K562 (cell line): ENCODE measurements at regions of chr22 and their contacts with region 1.

Region 1: GRCh38 chr22:20625270-20625669 is 117.9 kb downstream of the MED15 start:
- DNase-seq: no peak
- ATAC-seq: no peak
- H3K4me3 ChIP-seq: no peak overlapping the region
- H3K27ac ChIP-seq: no peak overlapping the region
- H3K4me1 ChIP-seq: peaks cover 0 to 3% of the 10 kb centered on the region in 2 experiments; a peak in 1 of 5 replicates
- H3K27me3 ChIP-seq: peaks cover 46 to 72% of the 10 kb centered on the region in 2 experiments
- CTCF ChIP-seq: no peak
- EP300 ChIP-seq: no peak
- POLR2A ChIP-seq: no peak
- RAD21 ChIP-seq: no peak

Region 2: GRCh38 chr22:20615021-20615420 is 10.2 kb before region 1 on chr22:
- CTCF ChIA-PET with region 1: no interaction called
- POLR2A ChIA-PET with region 1: interaction called, 234 read pairs
- in situ Hi-C with region 1: no loop called
- intact Hi-C with region 1: no loop called
- DNase-seq: no peak
- ATAC-seq: no peak; the same call in 2 of the 3 replicates
- H3K4me3 ChIP-seq: no peak overlapping the region
- H3K27ac ChIP-seq: no peak overlapping the region
- H3K4me1 ChIP-seq: peaks cover 7 to 13% of the 10 kb centered on the region in 2 experiments; a peak in 3 of 5 replicates
- H3K27me3 ChIP-seq: peaks cover 67 to 71% of the 10 kb centered on the region in 2 experiments
- CTCF ChIP-seq: no peak
- EP300 ChIP-seq: peak; percentile 70
- POLR2A ChIP-seq: no peak
- RAD21 ChIP-seq: no peak

Region 3: GRCh38 chr22:20822240-20822639 is 197.0 kb after region 1 on chr22:
- CTCF ChIA-PET with region 1: no interaction called
- POLR2A ChIA-PET with region 1: no interaction called
- in situ Hi-C with region 1: no loop called
- intact Hi-C with region 1: no loop called
- DNase-seq: no peak
- ATAC-seq: no peak
- H3K4me3 ChIP-seq: no peak overlapping the region
- H3K27ac ChIP-seq: no peak overlapping the region
- H3K4me1 ChIP-seq: no peaks in the 10 kb centered on the region
- H3K27me3 ChIP-seq: no peaks in the 10 kb centered on the region
- CTCF ChIP-seq: no peak
- EP300 ChIP-seq: no peak
- POLR2A ChIP-seq: no peak
- RAD21 ChIP-seq: no peak